ENCODE measurements at regions of chr22 and their contacts with region 1.

Region 1: DNA sequence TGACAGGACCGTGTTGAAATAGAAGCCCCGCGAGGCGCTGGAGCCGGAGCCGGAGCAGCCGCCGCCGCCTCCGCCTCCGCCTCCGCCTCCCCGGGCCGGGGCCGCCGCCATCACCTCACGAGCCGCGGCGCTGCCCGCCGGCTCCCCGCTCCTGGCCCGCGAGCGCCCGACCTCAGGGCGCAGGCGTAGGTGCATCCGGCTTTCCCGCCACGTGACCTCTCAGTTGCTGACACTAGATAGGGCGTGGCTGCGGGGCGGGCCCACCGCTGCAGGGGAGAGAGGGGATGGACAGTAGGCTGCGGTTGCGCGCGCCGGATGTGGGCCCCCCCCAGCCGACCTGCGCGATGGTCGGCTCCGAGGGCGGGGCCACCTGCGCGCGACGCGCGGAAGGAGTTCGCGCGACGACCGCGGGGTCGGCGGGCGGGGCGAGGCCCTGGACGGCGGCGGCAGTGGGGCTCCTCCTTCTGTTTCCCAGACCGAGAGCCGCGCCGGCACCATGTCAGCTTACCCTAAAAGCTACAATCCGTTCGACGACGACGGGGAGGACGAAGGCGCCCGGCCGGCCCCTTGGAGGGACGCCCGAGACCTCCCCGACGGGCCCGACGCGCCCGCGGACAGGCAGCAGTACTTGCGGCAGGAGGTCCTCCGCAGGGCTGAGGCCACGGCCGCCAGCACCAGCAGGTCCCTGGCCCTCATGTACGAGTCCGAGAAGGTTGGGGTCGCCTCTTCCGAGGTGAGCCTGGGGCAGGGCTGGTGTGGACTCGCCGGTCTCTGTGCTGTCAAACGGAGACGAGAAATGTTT is at the starts of genes PI4KA and SNAP29:
- DNase-seq: peak; percentile 94 to 99 (median 98)
- ATAC-seq: peak; percentile 88
- H3K4me3 ChIP-seq: peak within 1 kb of the TSS; percentile 63 to 78
- H3K4me3 Mint-ChIP-seq: peak within 1 kb of the TSS; percentile 91
- H3K27ac ChIP-seq: peak within 1 kb of the TSS; percentile 72 to 83
- H3K27ac Mint-ChIP-seq: peak within 1 kb of the TSS; percentile 88
- H3K4me1 ChIP-seq: peaks cover 24% of the 10 kb centered on the region
- H3K4me1 Mint-ChIP-seq: peaks cover 65% of the 10 kb centered on the region
- H3K27me3 ChIP-seq: no peaks in the 10 kb centered on the region
- H3K27me3 Mint-ChIP-seq: no peaks in the 10 kb centered on the region
- CTCF ChIP-seq: no peak
- total RNA-seq, gene PI4KA: 154 to 155 TPM
- total RNA-seq, gene SNAP29: 16.5 to 17.1 TPM

Region 2: DNA sequence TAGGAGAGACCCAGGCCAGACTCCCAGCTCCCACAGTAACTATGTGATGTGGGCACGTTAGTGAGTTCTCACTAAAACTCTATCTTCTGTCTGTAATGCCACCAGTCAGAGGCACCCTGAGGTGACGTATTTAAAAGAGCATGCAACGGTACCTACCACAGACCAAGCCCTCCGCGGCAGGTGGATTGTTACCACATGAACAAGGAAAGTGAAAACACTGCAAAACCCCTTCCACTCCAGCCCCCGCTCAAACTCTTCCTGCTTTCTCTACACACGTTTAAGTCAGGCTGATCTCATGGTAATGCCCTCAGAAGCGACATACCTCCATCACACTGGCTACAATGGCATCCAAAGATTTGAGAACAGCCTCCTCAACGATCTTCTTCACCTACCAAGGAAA is 48.2 kb before region 1 on chr22:
- CTCF ChIA-PET with region 1: no interaction called
- POLR2A ChIA-PET with region 1: no interaction called
- intact Hi-C with region 1: loop called (anchors 2 kb)
- DNase-seq: peak; percentile 16 to 85 (median 61)
- ATAC-seq: peak; percentile 96
- H3K4me3 ChIP-seq: no peak overlapping the region
- H3K4me3 Mint-ChIP-seq: peak overlapping the region; percentile 20
- H3K27ac ChIP-seq: peak overlapping the region; percentile 26 to 43
- H3K27ac Mint-ChIP-seq: peak overlapping the region; percentile 84
- H3K4me1 ChIP-seq: peaks cover 18% of the 10 kb centered on the region
- H3K4me1 Mint-ChIP-seq: peaks cover 20% of the 10 kb centered on the region
- H3K27me3 ChIP-seq: no peaks in the 10 kb centered on the region
- H3K27me3 Mint-ChIP-seq: no peaks in the 10 kb centered on the region
- CTCF ChIP-seq: no peak

Region 3: GRCh38 chr22:20843516-20843915 is 15.3 kb before region 1 on chr22:
- CTCF ChIA-PET with region 1: no interaction called
- POLR2A ChIA-PET with region 1: no interaction called
- intact Hi-C with region 1: no loop called
- DNase-seq: no peak
- ATAC-seq: no peak
- H3K4me3 ChIP-seq: no peak overlapping the region
- H3K4me3 Mint-ChIP-seq: no peak overlapping the region
- H3K27ac ChIP-seq: no peak overlapping the region
- H3K27ac Mint-ChIP-seq: peak overlapping the region; percentile 4
- H3K4me1 ChIP-seq: peaks cover 23% of the 10 kb centered on the region
- H3K4me1 Mint-ChIP-seq: peaks cover 68% of the 10 kb centered on the region
- H3K27me3 ChIP-seq: no peaks in the 10 kb centered on the region
- H3K27me3 Mint-ChIP-seq: no peaks in the 10 kb centered on the region
- CTCF ChIP-seq: no peak

Region 4: GRCh38 chr22:21055587-21056319 is 196.9 kb after region 1 on chr22:
- CTCF ChIA-PET with region 1: no interaction called
- POLR2A ChIA-PET with region 1: no interaction called
- intact Hi-C with region 1: no loop called
- DNase-seq: no peak
- ATAC-seq: no peak
- H3K4me3 ChIP-seq: no peak overlapping the region
- H3K4me3 Mint-ChIP-seq: peak overlapping the region; percentile 26
- H3K27ac ChIP-seq: no peak overlapping the region
- H3K27ac Mint-ChIP-seq: no peak overlapping the region
- H3K4me1 ChIP-seq: peaks cover 10% of the 10 kb centered on the region
- H3K4me1 Mint-ChIP-seq: peaks cover 10% of the 10 kb centered on the region
- H3K27me3 ChIP-seq: no peaks in the 10 kb centered on the region
- H3K27me3 Mint-ChIP-seq: no peaks in the 10 kb centered on the region
- CTCF ChIP-seq: no peak